Aorta (tissue), 5 donors: ENCODE measurements at regions of chr9 and their contacts with region 1.

Region 1: DNA sequence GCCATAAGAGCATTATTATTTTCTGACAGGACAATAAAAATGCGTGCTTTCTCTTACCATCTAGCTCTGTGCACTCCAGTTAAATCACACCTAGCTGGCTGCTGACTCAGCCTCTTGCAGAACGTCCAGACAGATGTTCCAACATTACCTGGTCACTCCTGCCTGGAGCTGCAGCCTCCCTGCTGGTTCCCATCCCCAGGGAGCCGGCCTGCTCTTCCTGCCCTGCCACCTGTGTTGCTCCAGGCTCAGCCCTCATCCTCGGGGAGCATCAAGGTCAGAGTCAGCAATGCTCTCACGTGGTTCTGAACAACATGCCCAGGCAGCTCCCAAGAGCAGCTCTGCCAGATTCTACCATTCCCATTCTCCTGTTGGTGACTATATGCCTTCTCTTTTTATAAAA is 81.3 kb downstream of the GADD45G start:
- DNase-seq: peak in 1 of 2 donors; percentile 38
- ATAC-seq: no peak
- H3K4me3 ChIP-seq: no peak overlapping the region
- H3K27ac ChIP-seq: no peak overlapping the region
- H3K4me1 ChIP-seq: peaks cover 0 to 2% of the 10 kb centered on the region in 2 donors
- H3K27me3 ChIP-seq: no peaks in the 10 kb centered on the region

Region 2: DNA sequence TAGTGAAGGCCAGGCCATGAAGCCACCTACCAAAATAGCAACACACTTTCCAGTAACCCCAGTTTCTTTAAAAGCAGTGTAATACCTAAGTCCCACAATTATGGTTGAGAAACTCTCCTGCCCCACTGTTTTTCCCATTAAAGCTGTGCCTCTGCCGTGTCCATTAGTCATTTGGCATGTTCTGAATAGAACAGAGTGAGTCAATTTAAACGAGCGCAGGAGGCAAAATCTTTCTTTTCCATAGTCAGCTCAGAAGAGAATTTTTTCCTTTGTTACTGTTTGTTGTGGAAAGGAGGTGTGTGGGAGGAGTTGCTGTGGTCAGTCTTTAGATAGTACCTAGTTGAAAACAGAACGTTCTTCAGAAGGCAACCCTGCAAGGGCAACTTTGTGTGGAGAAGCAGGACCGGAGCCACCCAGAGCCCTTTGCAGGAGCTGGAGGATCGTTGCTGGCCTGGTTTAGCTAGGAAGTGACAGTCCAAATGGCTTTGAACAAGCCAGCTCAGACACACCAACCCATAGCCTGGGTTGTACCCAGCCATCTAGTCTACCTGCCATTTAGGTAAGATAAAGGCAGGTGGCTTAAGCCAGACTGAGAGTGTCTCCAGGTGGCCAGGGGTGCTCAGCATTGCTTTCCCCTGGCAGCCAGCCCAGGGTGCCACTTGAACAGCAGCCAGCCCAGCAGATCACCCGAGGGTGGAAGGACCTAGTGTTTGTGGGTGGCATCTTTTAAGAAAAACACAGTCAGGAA is 50.9 kb before region 1 on chr9:
- intact Hi-C with region 1: loop called in 1 of 2 experiments (anchors 10 kb)
- DNase-seq: no peak
- ATAC-seq: no peak
- H3K4me3 ChIP-seq: no peak overlapping the region
- H3K27ac ChIP-seq: no peak overlapping the region
- H3K4me1 ChIP-seq: peaks cover 2% of the 10 kb centered on the region in 2 donors
- H3K27me3 ChIP-seq: no peaks in the 10 kb centered on the region